AG04450 (cell line): ENCODE measurements at regions of chr1 and their contacts with region 1.

Region 1: DNA sequence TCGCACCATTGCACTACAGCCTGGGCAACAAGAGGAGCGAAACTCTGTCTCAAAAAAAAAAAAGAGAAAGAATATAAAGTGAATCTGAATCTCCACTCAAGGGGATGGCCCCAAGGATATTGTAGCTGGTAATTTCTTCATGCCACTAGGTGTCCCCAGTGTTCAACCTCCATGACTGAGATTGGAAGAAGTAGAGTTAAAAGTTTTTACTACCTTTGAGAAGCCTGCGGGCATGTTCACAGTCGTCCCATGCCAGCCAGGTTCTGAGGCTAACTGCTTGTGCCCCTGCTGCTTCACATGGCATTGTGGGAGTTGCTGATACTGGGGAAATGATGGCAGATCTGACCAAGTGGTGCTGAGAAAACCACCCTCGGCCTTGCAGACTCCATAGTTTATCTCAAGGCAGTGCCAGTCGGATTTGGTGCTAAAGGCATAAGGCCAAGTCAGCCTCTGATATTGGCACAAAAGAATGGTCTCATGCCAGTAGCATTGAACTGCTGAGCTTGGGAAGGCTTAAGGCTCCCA is 10.8 kb upstream of the SHISA4 start:
- DNase-seq: no peak
- H3K4me3 ChIP-seq: no peak overlapping the region
- H3K27ac ChIP-seq: no peak overlapping the region
- H3K27me3 ChIP-seq: no peaks in the 10 kb centered on the region
- CTCF ChIP-seq: peak; percentile 74

Region 2: GRCh38 chr1:201170533-201171062 is 707.3 kb before region 1 on chr1:
- CTCF ChIA-PET with region 1: no interaction called
- POLR2A ChIA-PET with region 1: no interaction called
- DNase-seq: peak; percentile 50
- H3K4me3 ChIP-seq: peak overlapping the region; percentile 70
- H3K27ac ChIP-seq: peak overlapping the region; percentile 31
- H3K27me3 ChIP-seq: peaks cover 14% of the 10 kb centered on the region
- CTCF ChIP-seq: no peak

Region 3: DNA sequence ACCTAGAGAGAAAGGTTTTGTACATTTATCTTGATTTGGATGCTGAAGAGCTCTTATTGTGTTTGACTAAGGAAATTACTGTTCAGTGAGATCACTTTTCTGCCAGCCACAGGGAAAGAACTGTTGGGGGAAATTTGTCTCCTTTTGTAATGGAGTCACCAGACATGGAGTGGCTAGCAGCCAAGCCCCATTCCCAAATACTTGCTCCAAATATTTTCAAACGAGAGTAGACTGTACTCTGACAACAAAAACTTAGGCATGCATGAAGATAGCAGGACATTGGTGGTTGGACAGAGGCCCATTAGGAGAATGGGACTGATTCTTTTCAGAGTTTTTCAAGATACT is 27.9 kb before region 1 on chr1:
- CTCF ChIA-PET with region 1: interaction called, 10 read pairs
- POLR2A ChIA-PET with region 1: no interaction called
- DNase-seq: peak; percentile 65
- H3K4me3 ChIP-seq: no peak overlapping the region
- H3K27ac ChIP-seq: no peak overlapping the region
- H3K27me3 ChIP-seq: no peaks in the 10 kb centered on the region
- CTCF ChIP-seq: no peak

Region 4: DNA sequence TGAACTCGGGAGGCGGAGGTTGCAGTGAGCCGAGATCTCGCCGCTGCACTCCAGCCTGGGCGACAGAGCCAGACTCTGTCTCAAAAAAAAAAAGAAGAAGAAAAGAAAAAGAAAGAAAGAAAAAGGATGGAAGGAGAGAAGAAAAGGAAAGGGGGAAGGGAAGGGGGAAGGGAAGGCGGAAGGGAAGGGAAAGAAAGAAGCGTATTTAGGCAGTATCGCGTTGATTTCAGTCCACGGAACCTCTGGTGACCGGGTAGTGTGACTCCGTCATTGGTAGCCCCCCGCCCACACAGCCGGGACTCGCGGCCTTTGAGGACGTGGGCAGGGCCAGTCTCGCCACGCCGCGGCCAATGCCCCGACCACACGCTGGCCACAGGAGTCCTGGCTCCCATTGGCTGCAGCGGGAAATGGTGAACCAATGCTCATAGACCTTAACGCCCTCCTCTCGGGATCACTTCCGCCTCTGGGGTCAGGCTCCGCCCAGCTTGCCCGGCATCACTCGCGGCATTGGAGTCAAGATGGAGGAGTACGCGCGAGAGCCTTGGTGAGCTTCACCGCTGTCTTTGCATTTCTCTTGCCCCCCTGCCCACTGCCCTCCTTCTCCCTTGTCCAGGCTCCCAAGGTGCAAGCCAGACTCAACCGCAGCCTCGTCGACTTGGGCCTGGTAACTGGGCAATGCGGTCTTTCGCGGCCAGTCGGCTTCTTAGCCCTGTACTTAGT is 77.2 kb after region 1 on chr1 and contains the start of gene TIMM17A:
- CTCF ChIA-PET with region 1: interaction called, 11 read pairs
- POLR2A ChIA-PET with region 1: interaction called, 3 read pairs
- DNase-seq: peak; percentile 96
- H3K4me3 ChIP-seq: peak within 1 kb of the TSS; percentile 98
- H3K27ac ChIP-seq: peak within 1 kb of the TSS; percentile 80
- H3K27me3 ChIP-seq: no peaks in the 10 kb centered on the region
- CTCF ChIP-seq: no peak
- polyA plus RNA-seq, gene TIMM17A: 75.2 and 104 TPM in 2 replicates

Region 5: GRCh38 chr1:201970334-201971159 is 92.6 kb after region 1 on chr1:
- CTCF ChIA-PET with region 1: interaction called, 61 read pairs
- POLR2A ChIA-PET with region 1: no interaction called
- DNase-seq: no peak
- H3K4me3 ChIP-seq: no peak overlapping the region
- H3K27ac ChIP-seq: no peak overlapping the region
- H3K27me3 ChIP-seq: no peaks in the 10 kb centered on the region
- CTCF ChIP-seq: no peak

Region 6: GRCh38 chr1:202085682-202086404 is 207.9 kb after region 1 on chr1:
- CTCF ChIA-PET with region 1: no interaction called
- POLR2A ChIA-PET with region 1: no interaction called
- DNase-seq: no peak
- H3K4me3 ChIP-seq: no peak overlapping the region
- H3K27ac ChIP-seq: no peak overlapping the region
- H3K27me3 ChIP-seq: peaks cover 2% of the 10 kb centered on the region
- CTCF ChIP-seq: no peak